Mammary epithelial cell (primary cell): ENCODE measurements at regions of chr19 and their contacts with region 1.

Region 1: DNA sequence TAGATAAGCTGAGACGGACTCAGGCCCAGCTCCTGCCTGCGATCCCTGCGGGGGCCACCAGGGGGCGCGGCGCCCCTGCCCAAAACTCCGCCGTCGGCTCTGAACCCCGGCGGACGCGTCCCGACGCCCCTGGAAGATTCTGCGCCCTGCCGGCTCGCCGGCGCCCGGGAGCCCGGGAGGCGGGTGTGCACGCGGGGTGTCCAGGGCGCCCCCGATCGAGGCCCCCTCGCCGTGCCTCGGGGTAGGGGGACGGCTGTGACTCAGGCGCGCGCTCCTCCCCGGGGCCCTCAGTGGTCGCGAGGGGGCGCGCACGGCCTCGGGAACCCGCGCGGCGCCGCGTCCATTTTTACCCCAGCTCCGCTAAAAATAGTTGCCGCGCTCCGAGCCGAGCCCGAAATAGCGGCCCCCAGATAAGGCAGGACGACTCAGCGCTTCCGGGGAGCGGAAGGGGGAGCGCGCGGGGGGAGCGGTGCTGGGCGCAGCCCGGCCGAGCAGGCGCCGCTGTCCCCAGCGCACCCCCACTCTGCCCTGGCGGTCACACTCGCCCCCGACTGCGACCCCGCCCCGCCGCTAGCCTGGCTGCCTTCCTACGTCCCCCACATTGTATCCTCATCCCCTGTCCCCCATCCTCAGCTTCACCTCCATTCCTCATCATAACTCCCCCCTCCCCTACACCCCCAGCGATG is 16.0 kb upstream of the ERCC1 start:
- DNase-seq: peak; percentile 63
- H3K4me3 ChIP-seq: peak overlapping the region; percentile 55 to 58 (median 58)
- H3K27ac ChIP-seq: peak overlapping the region; percentile 61
- H3K4me1 ChIP-seq: peaks cover 14% of the 10 kb centered on the region
- H3K27me3 ChIP-seq: no peaks in the 10 kb centered on the region
- CTCF ChIP-seq: peak; percentile 84 to 88

Region 2: GRCh38 chr19:45423589-45424190 is 16.0 kb before region 1 on chr19 and contains the start of gene ERCC1:
- CTCF ChIA-PET with region 1: interaction called, 3 read pairs
- dilution Hi-C with region 1: no loop called
- in situ Hi-C with region 1: no loop called
- intact Hi-C with region 1: loop called (anchors 2 kb)
- DNase-seq: peak; percentile 99
- H3K4me3 ChIP-seq: peak within 1 kb of the TSS; percentile 50 to 95 (median 66)
- H3K27ac ChIP-seq: peak within 1 kb of the TSS; percentile 100
- H3K4me1 ChIP-seq: peaks cover 45% of the 10 kb centered on the region
- H3K27me3 ChIP-seq: no peaks in the 10 kb centered on the region
- CTCF ChIP-seq: no peak
- total RNA-seq, gene ERCC1: 81.9 to 316 TPM

Region 3: GRCh38 chr19:45455707-45456499 is 16.2 kb after region 1 on chr19:
- CTCF ChIA-PET with region 1: interaction called, 4 read pairs
- dilution Hi-C with region 1: no loop called
- in situ Hi-C with region 1: no loop called
- intact Hi-C with region 1: loop called (anchors 1 kb)
- DNase-seq: peak; percentile 98
- H3K4me3 ChIP-seq: peak overlapping the region in 1 of 3 experiments; percentile 23
- H3K27ac ChIP-seq: peak overlapping the region; percentile 79
- H3K4me1 ChIP-seq: peaks cover 26% of the 10 kb centered on the region
- H3K27me3 ChIP-seq: no peaks in the 10 kb centered on the region
- CTCF ChIP-seq: no peak

Region 4: GRCh38 chr19:45485305-45486077 is 45.8 kb after region 1 on chr19:
- CTCF ChIA-PET with region 1: no interaction called
- dilution Hi-C with region 1: no loop called
- in situ Hi-C with region 1: loop called in 1 of 2 experiments (anchors 5 kb)
- intact Hi-C with region 1: no loop called
- DNase-seq: peak; percentile 88
- H3K4me3 ChIP-seq: peak overlapping the region; percentile 40 to 61 (median 44)
- H3K27ac ChIP-seq: no peak overlapping the region
- H3K4me1 ChIP-seq: no peaks in the 10 kb centered on the region
- H3K27me3 ChIP-seq: no peaks in the 10 kb centered on the region
- CTCF ChIP-seq: peak; percentile 89 to 90